GM10248 (cell line): ENCODE measurements at regions of chr11 and their contacts with region 1.

Region 1: DNA sequence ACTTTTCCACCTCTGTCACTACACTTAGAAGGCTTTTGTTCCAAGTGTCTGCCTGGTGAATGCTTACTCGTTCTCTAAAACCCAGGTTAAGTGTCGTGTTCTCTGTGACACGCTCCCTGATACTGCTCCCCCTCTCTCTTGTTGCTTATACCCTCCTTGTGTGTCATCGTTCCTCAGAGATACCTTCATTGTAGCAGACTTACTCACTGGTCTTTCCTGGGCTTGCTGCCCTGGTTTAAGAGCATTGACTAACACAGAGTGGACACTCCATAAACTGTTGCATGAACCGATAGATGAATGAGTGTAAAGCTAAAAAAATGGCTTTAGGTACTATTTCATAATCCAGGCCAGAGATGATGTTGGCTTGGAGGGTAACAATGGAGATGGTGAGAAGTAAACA is 171.3 kb downstream of the GRIK4 start:
- DNase-seq: no peak
- CTCF ChIP-seq: no peak

Region 2: GRCh38 chr11:120182790-120183491 is 499.9 kb before region 1 on chr11:
- CTCF ChIA-PET with region 1: no interaction called
- POLR2A ChIA-PET with region 1: no interaction called
- DNase-seq: no peak
- CTCF ChIP-seq: peak; percentile 38

Region 3: GRCh38 chr11:120511116-120511819 is 171.6 kb before region 1 on chr11 and contains the start of gene GRIK4:
- CTCF ChIA-PET with region 1: interaction called, 124 read pairs
- POLR2A ChIA-PET with region 1: no interaction called
- DNase-seq: peak; percentile 93
- CTCF ChIP-seq: peak; percentile 97

Region 4: DNA sequence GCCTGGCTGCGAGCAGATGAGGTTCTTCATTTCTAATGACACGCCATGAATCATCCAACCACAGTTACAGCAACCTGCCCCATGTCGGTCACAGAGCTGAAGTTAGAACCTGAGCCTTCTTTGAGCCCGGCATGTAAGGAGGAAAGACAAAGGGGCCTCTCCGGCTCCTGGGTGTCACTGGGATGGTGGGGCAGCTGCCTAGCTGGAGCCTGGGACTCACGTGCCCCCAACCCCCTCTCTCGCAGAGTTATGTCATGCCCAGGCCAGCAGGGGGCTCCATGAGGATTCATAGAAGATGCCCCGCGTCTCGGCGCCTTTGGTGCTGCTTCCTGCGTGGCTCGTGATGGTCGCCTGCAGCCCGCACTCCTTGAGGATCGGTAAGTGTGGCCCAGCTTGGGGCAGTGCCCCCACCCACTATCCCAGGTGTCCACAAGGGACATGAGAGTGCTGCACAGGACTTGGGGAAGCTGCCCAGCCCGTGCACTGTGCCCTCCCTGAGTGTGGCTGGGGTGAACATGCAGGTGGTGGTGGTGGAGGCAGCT is 22.8 kb before region 1 on chr11:
- CTCF ChIA-PET with region 1: interaction called, 14 read pairs
- POLR2A ChIA-PET with region 1: no interaction called
- DNase-seq: peak; percentile 75
- CTCF ChIP-seq: peak; percentile 44

Region 5: GRCh38 chr11:120696597-120697218 is 13.8 kb after region 1 on chr11:
- CTCF ChIA-PET with region 1: interaction called, 72 read pairs
- POLR2A ChIA-PET with region 1: no interaction called
- DNase-seq: no peak
- CTCF ChIP-seq: peak; percentile 21